ENCODE measurements at regions of chr3 and their contacts with region 1.

Region 1: GRCh38 chr3:127822698-127823425 is 547 bp upstream of the MGLL start:
- DNase-seq: peak; percentile 82
- H3K4me3 ChIP-seq: peak overlapping the region; percentile 78 to 90 (median 84)
- H3K27ac ChIP-seq: peak overlapping the region; percentile 93 to 94 (median 94)
- H3K4me1 ChIP-seq: peaks cover 28 to 44% (median 38%) of the 10 kb centered on the region in 4 donors
- H3K27me3 ChIP-seq: no peaks in the 10 kb centered on the region
- CTCF ChIP-seq: peak in 1 of 5 experiments; percentile 29
- EP300 ChIP-seq: no peak
- POLR2A ChIP-seq: peak; percentile 73

Region 2: DNA sequence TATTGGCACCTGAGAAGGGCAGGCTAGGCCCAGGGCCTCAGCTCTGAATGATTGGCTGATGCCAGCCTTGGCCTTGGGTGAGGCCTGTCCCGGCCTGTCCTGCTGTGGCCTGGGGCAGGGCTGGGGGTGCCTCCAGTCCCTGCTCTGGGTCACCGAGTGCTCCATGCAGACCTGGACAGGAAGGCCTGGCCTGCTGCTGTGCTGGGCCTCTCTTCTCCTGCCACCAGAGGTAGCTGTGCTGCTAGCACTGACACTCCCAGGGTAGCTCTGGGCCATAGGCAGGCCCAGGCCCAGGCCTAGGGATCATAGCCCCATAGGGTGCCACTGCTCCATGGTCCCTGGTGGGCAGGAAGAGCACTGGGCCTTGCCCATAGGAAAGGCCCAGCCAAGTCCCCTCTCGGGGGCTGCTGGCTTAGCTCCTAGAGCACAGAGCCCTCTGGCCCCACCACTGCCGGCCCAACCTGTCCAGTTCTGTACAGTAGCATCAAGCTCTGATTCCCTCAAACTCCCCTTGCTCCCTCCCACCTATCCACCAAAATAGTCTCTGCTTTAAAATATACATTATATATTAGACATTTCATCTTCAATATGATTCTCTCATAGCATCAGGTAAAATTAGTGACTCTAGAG is 131.9 kb before region 1 on chr3:
- in situ Hi-C with region 1: loop called in 1 of 4 experiments (anchors 25 kb)
- intact Hi-C with region 1: loop called (anchors 5 kb)
- DNase-seq: no peak
- H3K4me3 ChIP-seq: no peak overlapping the region
- H3K27ac ChIP-seq: peak overlapping the region; percentile 2 to 70 (median 61)
- H3K4me1 ChIP-seq: peaks cover 6 to 13% (median 9%) of the 10 kb centered on the region in 4 donors
- H3K27me3 ChIP-seq: no peaks in the 10 kb centered on the region
- CTCF ChIP-seq: peak; percentile 33 to 46 (median 41)
- EP300 ChIP-seq: no peak
- POLR2A ChIP-seq: no peak

Region 3: DNA sequence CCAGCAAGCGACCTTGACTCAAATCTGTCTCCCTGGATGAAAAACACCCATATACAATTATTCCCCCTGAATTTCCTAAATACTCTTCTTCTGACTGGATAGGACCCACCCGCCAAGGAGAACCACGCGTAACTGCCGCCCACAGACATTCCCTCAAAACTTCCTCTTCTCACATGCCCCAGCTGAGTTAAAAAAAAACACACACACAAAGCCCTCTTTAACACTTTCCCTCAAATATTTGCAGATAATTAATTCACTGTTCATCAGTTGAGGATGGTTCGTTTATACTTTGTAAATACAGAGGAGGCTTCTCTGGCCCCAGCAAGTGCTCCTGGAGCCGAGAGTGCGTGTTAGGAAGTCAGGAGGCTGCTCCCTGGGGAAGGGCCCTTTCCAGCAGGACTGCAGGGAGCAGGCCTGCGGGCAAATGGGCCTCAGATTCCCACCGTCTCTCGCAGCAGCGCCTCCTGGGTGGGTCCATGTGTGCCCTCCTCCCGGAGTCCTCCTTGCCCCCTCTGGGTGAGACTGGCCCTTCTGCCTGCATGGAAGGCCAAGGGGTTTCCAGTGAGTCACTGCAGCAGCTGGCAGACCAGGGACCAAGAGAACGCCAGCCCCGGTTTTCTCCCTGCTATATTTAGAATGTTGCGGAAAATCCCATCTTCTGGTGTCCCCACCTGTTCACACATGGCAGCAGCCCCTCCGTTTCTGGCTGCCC is 47.3 kb before region 1 on chr3:
- in situ Hi-C with region 1: no loop called
- intact Hi-C with region 1: no loop called
- DNase-seq: no peak
- H3K4me3 ChIP-seq: no peak overlapping the region
- H3K27ac ChIP-seq: peak overlapping the region; percentile 71 to 78 (median 76)
- H3K4me1 ChIP-seq: peaks cover 13 to 52% (median 22%) of the 10 kb centered on the region in 4 donors
- H3K27me3 ChIP-seq: no peaks in the 10 kb centered on the region
- CTCF ChIP-seq: no peak
- EP300 ChIP-seq: no peak
- POLR2A ChIP-seq: no peak